Left lung (tissue), 14 donors: ENCODE measurements at regions of chr11 and their contacts with region 1.

Region 1: DNA sequence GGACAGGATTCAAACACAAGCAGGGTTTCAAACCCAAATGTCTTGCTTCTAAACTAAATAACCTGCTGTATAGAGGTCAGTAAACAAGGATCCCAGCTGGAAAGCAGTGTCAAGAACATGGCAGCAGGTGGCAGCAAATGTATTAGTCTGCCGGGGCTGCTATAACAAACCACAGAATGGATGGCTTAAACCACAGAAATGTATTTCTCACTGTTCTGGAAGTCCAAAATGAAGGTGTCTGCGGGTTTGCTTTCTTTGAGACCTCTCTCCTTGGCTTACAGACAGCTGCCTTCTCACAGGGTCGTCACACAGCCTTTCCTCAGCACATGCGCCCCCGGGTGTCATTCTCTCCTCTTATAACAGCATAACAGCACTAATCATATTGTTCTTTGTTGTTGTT is 65.1 kb upstream of the LRRC55 start:
- DNase-seq: no peak
- ATAC-seq: peak; percentile 73
- H3K4me3 ChIP-seq: no peak overlapping the region
- H3K27ac ChIP-seq: no peak overlapping the region
- H3K4me1 ChIP-seq: no peaks in the 10 kb centered on the region
- H3K27me3 ChIP-seq: no peaks in the 10 kb centered on the region
- CTCF ChIP-seq: peak; percentile 39 to 55

Region 2: DNA sequence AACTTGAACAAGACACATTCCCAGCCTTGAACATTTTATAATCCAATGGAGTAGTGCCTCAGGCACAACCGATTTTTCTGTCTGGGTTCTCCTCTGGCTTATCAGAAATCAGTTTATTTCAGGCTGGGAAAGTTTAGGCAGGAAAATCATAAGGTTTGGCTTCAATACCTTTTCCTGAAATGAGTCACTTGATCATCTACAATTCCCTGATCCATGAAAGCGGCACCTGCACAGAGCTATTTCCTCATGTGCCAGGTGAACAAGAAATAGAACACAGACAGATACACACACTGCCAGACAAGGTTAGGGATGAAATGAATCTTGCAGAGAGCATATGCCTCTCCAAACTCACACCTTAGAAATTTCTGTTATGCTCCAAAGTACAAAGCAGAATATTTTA is 261.4 kb before region 1 on chr11:
- intact Hi-C with region 1: no loop called
- DNase-seq: no peak
- ATAC-seq: no peak
- H3K4me3 ChIP-seq: no peak overlapping the region
- H3K27ac ChIP-seq: no peak overlapping the region
- H3K4me1 ChIP-seq: no peaks in the 10 kb centered on the region
- H3K27me3 ChIP-seq: no peaks in the 10 kb centered on the region
- CTCF ChIP-seq: no peak

Region 3: DNA sequence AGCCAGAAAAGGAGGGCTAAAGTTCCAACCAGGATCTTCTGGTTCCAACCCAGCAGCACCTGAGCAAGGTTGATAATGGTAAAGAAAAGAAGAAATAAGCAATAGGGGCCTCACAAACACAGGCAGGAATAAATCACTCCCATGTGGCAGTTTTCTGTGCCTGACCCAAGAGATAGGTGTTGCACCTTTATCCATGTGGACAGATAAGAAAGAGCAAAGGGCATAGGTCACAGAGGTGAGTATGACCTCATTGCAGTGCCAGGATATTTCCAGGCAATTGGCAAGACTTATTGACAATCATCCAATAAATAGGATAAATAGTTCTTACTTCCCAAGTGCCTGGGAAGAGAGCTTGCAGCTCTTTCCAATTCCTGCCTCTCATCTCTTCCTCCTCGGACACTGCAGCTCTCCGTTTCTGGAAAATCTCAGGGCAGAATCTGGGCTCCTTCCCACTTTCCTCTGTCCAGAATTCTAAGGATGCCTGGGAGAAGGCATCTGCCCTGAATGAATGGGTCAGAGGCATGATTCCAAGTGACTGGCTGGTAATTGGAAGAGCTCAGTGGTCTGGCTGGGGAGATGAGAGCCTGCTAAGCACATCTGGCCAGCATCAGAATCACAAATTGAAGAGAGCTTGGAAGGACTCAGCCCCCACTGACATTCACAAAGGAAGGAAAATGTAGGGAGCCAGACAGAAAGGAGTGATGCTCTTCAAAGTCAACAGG is 50.6 kb after region 1 on chr11:
- intact Hi-C with region 1: no loop called
- DNase-seq: no peak
- ATAC-seq: no peak
- H3K4me3 ChIP-seq: no peak overlapping the region
- H3K27ac ChIP-seq: no peak overlapping the region
- H3K4me1 ChIP-seq: no peaks in the 10 kb centered on the region
- H3K27me3 ChIP-seq: no peaks in the 10 kb centered on the region
- CTCF ChIP-seq: no peak

Region 4: GRCh38 chr11:57237204-57237681 is 120.6 kb after region 1 on chr11 and contains the start of gene APLNR:
- intact Hi-C with region 1: no loop called
- DNase-seq: no peak
- ATAC-seq: no peak
- H3K4me3 ChIP-seq: peak within 1 kb of the TSS; percentile 3 to 14
- H3K27ac ChIP-seq: peak within 1 kb of the TSS; percentile 3 to 25
- H3K4me1 ChIP-seq: no peaks in the 10 kb centered on the region
- H3K27me3 ChIP-seq: peaks cover 0 to 64% of the 10 kb centered on the region in 2 donors
- CTCF ChIP-seq: no peak
- polyA plus RNA-seq, gene APLNR: 131 to 189 (median 159) TPM

Region 5: DNA sequence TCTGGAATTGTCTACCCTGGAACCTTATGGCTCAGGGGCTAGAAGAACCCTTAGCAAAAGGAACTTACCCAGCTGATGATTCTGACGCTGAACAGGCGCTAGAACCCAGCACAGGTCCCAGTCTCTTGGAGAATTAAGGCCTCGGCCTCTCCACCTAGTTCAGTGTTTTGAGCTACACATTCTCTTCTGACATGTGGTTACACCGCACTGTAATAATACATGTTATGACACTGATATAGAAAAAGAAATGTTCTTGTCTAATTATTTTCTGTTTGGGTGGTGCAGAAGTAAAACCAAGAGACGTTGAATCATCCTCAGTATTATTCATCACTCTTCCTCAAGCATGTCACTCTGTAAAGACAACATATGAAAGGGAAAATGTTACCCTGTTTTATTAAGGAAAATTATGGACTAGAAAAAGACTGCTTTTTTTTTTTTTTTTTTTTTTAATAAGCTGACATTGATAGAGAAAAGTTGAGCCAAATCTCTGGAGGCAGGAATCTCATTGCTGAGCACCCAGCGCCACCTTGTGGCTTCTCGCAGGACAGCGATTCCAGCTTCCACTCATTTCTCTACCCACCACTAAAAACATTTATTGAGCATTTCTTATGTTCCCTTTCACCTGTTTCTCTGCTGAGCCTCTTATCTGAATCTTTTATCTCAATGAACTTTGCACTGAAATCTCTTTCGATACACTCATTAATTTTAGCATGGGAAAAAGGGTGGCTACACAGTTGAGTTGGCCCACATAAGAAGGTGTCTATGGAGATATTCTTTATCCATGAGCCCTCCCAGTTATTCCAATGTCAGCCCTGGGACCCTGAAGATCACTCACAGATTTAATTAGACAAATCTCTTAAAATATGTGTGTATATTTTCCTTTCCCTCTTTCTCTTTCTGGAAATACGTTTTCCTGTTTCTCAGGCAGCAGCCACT is 133.0 kb after region 1 on chr11:
- intact Hi-C with region 1: loop called in 1 of 2 experiments (anchors 5 kb)
- DNase-seq: peak; percentile 39 to 81 (median 73)
- ATAC-seq: peak; percentile 92
- H3K4me3 ChIP-seq: no peak overlapping the region
- H3K27ac ChIP-seq: no peak overlapping the region
- H3K4me1 ChIP-seq: peaks cover 0 to 6% of the 10 kb centered on the region in 2 donors
- H3K27me3 ChIP-seq: no peaks in the 10 kb centered on the region
- CTCF ChIP-seq: peak; percentile 77 to 79

Region 6: DNA sequence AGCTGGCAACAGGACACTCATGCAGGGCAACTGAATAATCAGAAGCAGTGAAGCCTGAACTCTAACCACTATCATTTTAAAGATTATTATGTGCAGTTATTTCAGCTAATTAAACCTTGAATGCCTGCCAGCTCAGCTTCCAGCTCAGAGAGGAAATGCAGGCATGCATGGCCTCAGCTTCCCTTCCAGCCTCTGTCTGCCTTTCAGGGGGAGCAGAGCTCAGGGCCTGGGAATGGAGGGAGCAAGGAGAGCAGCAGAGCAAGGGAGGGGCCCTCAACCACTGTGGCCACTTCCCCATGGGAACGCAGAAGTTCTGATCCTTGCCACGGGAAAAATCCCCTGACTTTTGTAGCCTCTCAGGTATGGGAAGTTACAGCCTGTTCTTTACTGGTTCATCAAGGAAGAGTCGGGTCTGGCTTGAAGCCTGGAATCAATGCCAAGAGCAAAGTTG is 152.9 kb after region 1 on chr11:
- intact Hi-C with region 1: no loop called
- DNase-seq: no peak
- ATAC-seq: no peak
- H3K4me3 ChIP-seq: no peak overlapping the region
- H3K27ac ChIP-seq: no peak overlapping the region
- H3K4me1 ChIP-seq: no peaks in the 10 kb centered on the region
- H3K27me3 ChIP-seq: no peaks in the 10 kb centered on the region
- CTCF ChIP-seq: no peak